ENCODE measurements at regions of chr22 and their contacts with region 1.

Region 1: GRCh38 chr22:32050678-32051515 is 7.8 kb downstream of the SLC5A1 start:
- DNase-seq: peak; percentile 97
- H3K4me3 Mint-ChIP-seq: no peak overlapping the region
- H3K27ac Mint-ChIP-seq: peak overlapping the region; percentile 77
- H3K4me1 Mint-ChIP-seq: peaks cover 16% of the 10 kb centered on the region
- H3K27me3 Mint-ChIP-seq: peaks cover 3% of the 10 kb centered on the region
- CTCF ChIP-seq: no peak

Region 2: GRCh38 chr22:32020117-32020516 is 30.8 kb before region 1 on chr22:
- CTCF ChIA-PET with region 1: interaction called, 4 read pairs
- POLR2A ChIA-PET with region 1: interaction called, 24 read pairs
- intact Hi-C with region 1: loop called (anchors 1 kb)
- DNase-seq: peak; percentile 96
- H3K4me3 Mint-ChIP-seq: no peak overlapping the region
- H3K27ac Mint-ChIP-seq: no peak overlapping the region
- H3K4me1 Mint-ChIP-seq: peaks cover 18% of the 10 kb centered on the region
- H3K27me3 Mint-ChIP-seq: peaks cover 15% of the 10 kb centered on the region
- CTCF ChIP-seq: no peak

Region 3: GRCh38 chr22:32040324-32040904 is 10.5 kb before region 1 on chr22:
- CTCF ChIA-PET with region 1: no interaction called
- POLR2A ChIA-PET with region 1: no interaction called
- intact Hi-C with region 1: no loop called
- DNase-seq: no peak
- H3K4me3 Mint-ChIP-seq: no peak overlapping the region
- H3K27ac Mint-ChIP-seq: no peak overlapping the region
- H3K4me1 Mint-ChIP-seq: no peaks in the 10 kb centered on the region
- H3K27me3 Mint-ChIP-seq: peaks cover 86% of the 10 kb centered on the region
- CTCF ChIP-seq: no peak

Measured in MCF 10A (cell line).